Right cardiac atrium (tissue), 5 donors: ENCODE measurements at regions of chr11 and their contacts with region 1.

Region 1: GRCh38 chr11:120108154-120108865 is 29.6 kb downstream of the TRIM29 start:
- DNase-seq: peak; percentile 62 to 88 (median 84)
- ATAC-seq: peak; percentile 83 to 85
- H3K4me3 ChIP-seq: no peak overlapping the region
- H3K27ac ChIP-seq: no peak overlapping the region
- H3K4me1 ChIP-seq: no peaks in the 10 kb centered on the region
- H3K27me3 ChIP-seq: no peaks in the 10 kb centered on the region

Region 2: GRCh38 chr11:119481021-119481666 is 627.2 kb before region 1 on chr11:
- intact Hi-C with region 1: loop called in 2 of 4 experiments (anchors 5 kb)
- DNase-seq: peak; percentile 83 to 92 (median 90)
- ATAC-seq: peak; percentile 72 to 87
- H3K4me3 ChIP-seq: no peak overlapping the region
- H3K27ac ChIP-seq: no peak overlapping the region
- H3K4me1 ChIP-seq: no peaks in the 10 kb centered on the region
- H3K27me3 ChIP-seq: no peaks in the 10 kb centered on the region

Region 3: GRCh38 chr11:119666463-119667131 is 441.7 kb before region 1 on chr11:
- intact Hi-C with region 1: loop called (anchors 2 to 10 kb)
- DNase-seq: peak; percentile 76 to 93 (median 92)
- ATAC-seq: peak; percentile 92 to 95
- H3K4me3 ChIP-seq: no peak overlapping the region
- H3K27ac ChIP-seq: no peak overlapping the region
- H3K4me1 ChIP-seq: no peaks in the 10 kb centered on the region
- H3K27me3 ChIP-seq: no peaks in the 10 kb centered on the region

Region 4: DNA sequence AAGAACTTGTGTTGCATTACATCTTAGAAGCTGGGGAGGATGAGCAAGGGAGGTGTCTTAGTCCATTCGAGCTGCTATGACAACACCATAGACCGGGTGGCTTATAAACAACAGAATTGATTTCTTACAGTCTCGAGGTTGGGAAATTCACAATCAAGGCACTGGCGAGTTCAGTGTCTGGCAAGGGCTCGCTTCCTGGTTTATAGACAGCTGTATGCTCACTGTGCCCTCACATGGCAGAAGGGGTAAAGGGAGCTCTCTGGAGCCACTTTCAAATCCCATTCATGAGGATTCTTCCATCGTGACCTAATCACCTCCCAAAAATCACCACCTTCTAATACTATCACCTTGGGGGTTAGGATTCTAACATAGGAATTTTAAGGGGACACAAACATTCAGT is 229.3 kb before region 1 on chr11:
- intact Hi-C with region 1: no loop called
- DNase-seq: no peak
- ATAC-seq: peak in 1 of 2 donors; percentile 42
- H3K4me3 ChIP-seq: no peak overlapping the region
- H3K27ac ChIP-seq: no peak overlapping the region
- H3K4me1 ChIP-seq: peaks cover 2% of the 10 kb centered on the region
- H3K27me3 ChIP-seq: no peaks in the 10 kb centered on the region

Region 5: GRCh38 chr11:120013325-120014270 is 94.7 kb before region 1 on chr11:
- intact Hi-C with region 1: loop called in 1 of 4 experiments (anchors 5 kb)
- DNase-seq: peak; percentile 49 to 74 (median 72)
- ATAC-seq: peak; percentile 74 to 85
- H3K4me3 ChIP-seq: no peak overlapping the region
- H3K27ac ChIP-seq: no peak overlapping the region
- H3K4me1 ChIP-seq: no peaks in the 10 kb centered on the region
- H3K27me3 ChIP-seq: no peaks in the 10 kb centered on the region